ENCODE measurements at regions of chr10 and their contacts with region 1.

Region 1: GRCh38 chr10:62038609-62039190 is 137.2 kb downstream of the ARID5B start:
- DNase-seq: peak; percentile 100
- ATAC-seq: peak; percentile 50
- H3K4me3 ChIP-seq: peak overlapping the region; percentile 46
- H3K27ac ChIP-seq: peak overlapping the region; percentile 85
- H3K4me1 ChIP-seq: peaks cover 54% of the 10 kb centered on the region
- H3K27me3 ChIP-seq: no peaks in the 10 kb centered on the region
- CTCF ChIP-seq: peak; percentile 100

Region 2: GRCh38 chr10:61750929-61751471 is 287.7 kb before region 1 on chr10:
- CTCF ChIA-PET with region 1: no interaction called
- POLR2A ChIA-PET with region 1: no interaction called
- intact Hi-C with region 1: loop called (anchors 1 kb)
- DNase-seq: peak; percentile 98
- ATAC-seq: peak; percentile 83
- H3K4me3 ChIP-seq: no peak overlapping the region
- H3K27ac ChIP-seq: peak overlapping the region; percentile 48
- H3K4me1 ChIP-seq: peaks cover 26% of the 10 kb centered on the region
- H3K27me3 ChIP-seq: no peaks in the 10 kb centered on the region
- CTCF ChIP-seq: peak; percentile 100

Region 3: DNA sequence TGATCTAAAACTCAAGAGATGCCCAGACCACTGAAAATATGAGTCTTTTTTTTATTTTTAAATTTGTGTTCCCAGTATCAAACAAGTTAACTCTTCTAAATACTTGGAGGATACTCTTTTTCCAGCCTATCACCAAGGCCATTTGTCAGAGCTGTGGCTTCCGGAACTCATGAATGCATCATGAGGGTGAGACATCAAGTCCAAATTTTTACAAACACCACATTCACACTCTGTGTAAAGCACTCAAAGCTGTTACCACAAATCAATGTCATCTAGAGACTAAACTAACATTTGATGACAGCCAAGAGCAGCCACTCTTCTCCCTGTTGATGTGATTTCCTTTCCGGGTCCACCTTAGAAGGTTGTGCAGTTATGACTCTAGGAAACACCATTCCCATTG is 181.0 kb before region 1 on chr10:
- CTCF ChIA-PET with region 1: no interaction called
- POLR2A ChIA-PET with region 1: no interaction called
- intact Hi-C with region 1: no loop called
- DNase-seq: no peak
- ATAC-seq: peak; percentile 46
- H3K4me3 ChIP-seq: no peak overlapping the region
- H3K27ac ChIP-seq: no peak overlapping the region
- H3K4me1 ChIP-seq: 0 out of 2 replicates have a peak, but pooled peaks cover 6% of the 10 kb centered on the region
- H3K27me3 ChIP-seq: no peaks in the 10 kb centered on the region
- CTCF ChIP-seq: no peak

Region 4: GRCh38 chr10:61937631-61938351 is 100.9 kb before region 1 on chr10:
- CTCF ChIA-PET with region 1: interaction called, 13 read pairs
- POLR2A ChIA-PET with region 1: interaction called, 3 read pairs
- intact Hi-C with region 1: loop called (anchors 1 kb)
- DNase-seq: peak; percentile 100
- ATAC-seq: peak; percentile 55
- H3K4me3 ChIP-seq: peak overlapping the region; percentile 5; the same call in 1 of the 2 replicates
- H3K27ac ChIP-seq: peak overlapping the region; percentile 81
- H3K4me1 ChIP-seq: peaks cover 59% of the 10 kb centered on the region
- H3K27me3 ChIP-seq: no peaks in the 10 kb centered on the region
- CTCF ChIP-seq: no peak

Region 5: DNA sequence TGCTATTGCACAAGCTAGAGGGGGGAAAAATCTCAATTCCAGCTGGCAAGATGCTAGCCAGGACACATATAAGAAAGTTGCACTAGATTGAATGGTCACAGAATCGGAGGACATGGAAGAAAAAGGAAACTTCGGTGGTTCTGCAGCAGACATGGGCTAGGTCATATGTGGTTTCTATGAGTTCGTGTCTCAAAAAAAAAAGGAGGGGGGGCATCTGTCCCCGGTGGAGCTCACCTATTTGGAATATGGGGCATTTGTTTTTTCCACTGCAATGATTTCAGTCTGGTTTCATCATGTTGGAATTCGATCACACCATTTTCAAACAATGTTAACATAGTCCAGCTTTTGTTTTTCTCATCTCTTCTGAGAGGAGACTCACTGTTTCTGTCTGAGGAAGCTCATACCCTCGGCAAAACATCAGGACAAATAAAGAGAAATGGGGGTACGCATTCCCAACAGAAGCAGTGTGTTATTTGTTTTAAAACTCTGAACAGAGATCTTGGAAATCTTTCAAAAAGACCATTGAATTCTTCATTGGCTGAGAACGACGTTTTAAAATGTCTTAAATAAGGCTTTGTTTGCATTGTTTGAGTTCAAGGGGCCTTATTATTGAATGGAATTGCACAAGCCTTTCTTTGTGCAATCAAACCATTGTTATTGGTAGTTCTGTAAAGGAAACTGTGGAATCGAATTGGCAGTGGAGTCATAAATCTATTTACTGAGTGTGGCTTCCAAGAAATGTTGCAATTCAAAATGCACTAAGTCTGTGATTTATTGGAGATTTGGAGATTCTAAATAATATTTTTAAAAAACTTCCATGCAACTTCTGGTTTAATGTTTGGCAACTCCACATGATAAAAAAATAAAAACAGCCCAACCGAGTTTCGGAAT is 56.7 kb after region 1 on chr10:
- CTCF ChIA-PET with region 1: interaction called, 4 read pairs
- POLR2A ChIA-PET with region 1: interaction called, 3 read pairs
- intact Hi-C with region 1: loop called (anchors 1 kb)
- DNase-seq: peak; percentile 97
- ATAC-seq: peak; percentile 50
- H3K4me3 ChIP-seq: peak overlapping the region; percentile 43
- H3K27ac ChIP-seq: peak overlapping the region; percentile 57
- H3K4me1 ChIP-seq: peaks cover 43% of the 10 kb centered on the region
- H3K27me3 ChIP-seq: no peaks in the 10 kb centered on the region
- CTCF ChIP-seq: no peak

Region 6: DNA sequence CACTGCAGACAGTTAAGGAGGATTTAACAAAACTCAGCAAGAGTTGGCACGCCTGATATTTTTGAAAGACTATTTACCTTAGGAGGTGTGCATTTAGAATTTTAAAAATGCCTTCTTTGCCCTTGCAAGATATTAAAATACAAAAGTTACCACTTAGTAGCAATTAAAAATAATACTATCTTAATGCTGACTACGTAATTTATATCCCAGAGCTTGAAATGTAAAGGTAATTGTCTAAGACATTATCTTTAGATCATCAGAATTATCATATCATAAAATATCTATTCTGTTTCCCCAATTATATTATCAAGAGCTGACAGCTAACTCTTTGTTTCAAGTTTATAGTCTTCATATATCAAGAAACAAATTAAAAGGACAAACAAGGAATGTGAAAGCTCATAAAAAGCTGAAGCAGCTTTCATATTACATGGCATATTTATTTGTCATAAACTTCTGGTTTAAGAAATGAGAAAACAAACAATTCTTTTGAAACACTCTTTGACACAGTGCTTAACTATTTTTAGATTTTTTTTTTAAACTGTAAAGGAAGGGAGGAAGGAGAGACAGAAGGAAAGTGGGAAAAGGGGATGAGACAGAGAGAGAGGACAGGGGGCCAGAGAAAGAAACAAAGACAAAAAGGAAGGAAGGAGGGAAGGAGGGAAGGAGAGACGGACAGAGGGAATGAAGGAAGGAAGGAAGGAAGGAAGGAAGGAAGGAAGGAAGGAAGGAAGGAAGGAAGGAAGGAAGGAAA is 156.4 kb after region 1 on chr10:
- CTCF ChIA-PET with region 1: no interaction called
- POLR2A ChIA-PET with region 1: no interaction called
- intact Hi-C with region 1: loop called (anchors 1 kb)
- DNase-seq: peak; percentile 38
- ATAC-seq: peak; percentile 74
- H3K4me3 ChIP-seq: no peak overlapping the region
- H3K27ac ChIP-seq: no peak overlapping the region
- H3K4me1 ChIP-seq: peaks cover 6% of the 10 kb centered on the region
- H3K27me3 ChIP-seq: no peaks in the 10 kb centered on the region
- CTCF ChIP-seq: no peak

Region 7: GRCh38 chr10:62384057-62384446 is 345.4 kb after region 1 on chr10:
- CTCF ChIA-PET with region 1: no interaction called
- POLR2A ChIA-PET with region 1: no interaction called
- intact Hi-C with region 1: loop called (anchors 2 kb)
- DNase-seq: peak; percentile 100
- ATAC-seq: peak; percentile 74
- H3K4me3 ChIP-seq: peak overlapping the region; percentile 36
- H3K27ac ChIP-seq: peak overlapping the region; percentile 79
- H3K4me1 ChIP-seq: peaks cover 88% of the 10 kb centered on the region
- H3K27me3 ChIP-seq: no peaks in the 10 kb centered on the region
- CTCF ChIP-seq: no peak